ENCODE measurements at regions of chr3 and their contacts with region 1.

Region 1: GRCh38 chr3:15051531-15051930 is 13.6 kb downstream of the MRPS25 start:
- DNase-seq: peak; percentile 23 to 60
- ATAC-seq: peak; percentile 58 to 68 (median 66)
- H3K4me3 ChIP-seq: no peak overlapping the region
- H3K4me3 Mint-ChIP-seq: no peak overlapping the region
- H3K27ac ChIP-seq: peak overlapping the region; percentile 18
- H3K27ac Mint-ChIP-seq: peak overlapping the region in 1 of 2 donors; percentile 33
- H3K4me1 ChIP-seq: peaks cover 28% of the 10 kb centered on the region
- H3K4me1 Mint-ChIP-seq: peaks cover 11 to 35% of the 10 kb centered on the region in 2 donors
- H3K27me3 ChIP-seq: no peaks in the 10 kb centered on the region
- H3K27me3 Mint-ChIP-seq: no peaks in the 10 kb centered on the region
- CTCF ChIP-seq: peak; percentile 69

Region 2: DNA sequence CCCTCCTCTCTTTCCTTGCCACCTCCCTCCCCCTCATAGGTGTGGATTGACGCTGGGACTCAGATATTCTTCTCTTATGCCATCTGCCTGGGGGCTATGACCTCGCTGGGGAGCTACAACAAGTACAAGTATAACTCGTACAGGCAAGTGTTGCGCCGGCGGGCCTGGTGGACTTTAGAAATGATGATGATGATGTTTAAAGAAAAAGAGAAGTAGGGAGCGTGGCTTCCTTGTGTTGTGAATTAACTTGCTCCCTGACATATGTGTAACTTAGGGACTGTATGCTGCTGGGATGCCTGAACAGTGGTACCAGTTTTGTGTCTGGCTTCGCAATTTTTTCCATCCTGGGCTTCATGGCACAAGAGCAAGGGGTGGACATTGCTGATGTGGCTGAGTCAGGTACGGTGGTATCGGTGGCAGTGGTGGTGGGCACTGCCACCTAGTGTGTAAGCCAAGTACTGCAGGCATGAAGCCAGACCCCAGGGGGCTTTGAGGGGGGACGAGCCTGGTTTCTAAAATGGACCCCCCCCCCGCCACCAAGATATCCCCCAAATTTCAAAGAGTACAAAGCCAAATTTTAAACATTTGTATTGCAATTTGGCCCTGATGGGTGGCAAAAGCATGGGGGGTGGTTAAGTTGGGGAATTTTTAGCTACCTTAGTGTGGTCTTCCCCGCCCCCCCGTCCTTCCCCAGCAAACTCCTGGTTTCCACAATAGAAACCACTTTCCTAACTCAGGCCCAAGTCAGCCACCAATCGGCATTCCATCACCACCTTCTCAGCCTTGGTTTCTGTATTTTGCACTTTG is 583.5 kb before region 1 on chr3:
- intact Hi-C with region 1: no loop called
- DNase-seq: peak; percentile 49 to 74
- ATAC-seq: peak; percentile 71 to 91 (median 87)
- H3K4me3 ChIP-seq: no peak overlapping the region
- H3K4me3 Mint-ChIP-seq: no peak overlapping the region
- H3K27ac ChIP-seq: no peak overlapping the region
- H3K27ac Mint-ChIP-seq: no peak overlapping the region
- H3K4me1 ChIP-seq: no peaks in the 10 kb centered on the region
- H3K4me1 Mint-ChIP-seq: no peaks in the 10 kb centered on the region
- H3K27me3 ChIP-seq: no peaks in the 10 kb centered on the region
- H3K27me3 Mint-ChIP-seq: no peaks in the 10 kb centered on the region
- CTCF ChIP-seq: peak; percentile 84

Region 3: DNA sequence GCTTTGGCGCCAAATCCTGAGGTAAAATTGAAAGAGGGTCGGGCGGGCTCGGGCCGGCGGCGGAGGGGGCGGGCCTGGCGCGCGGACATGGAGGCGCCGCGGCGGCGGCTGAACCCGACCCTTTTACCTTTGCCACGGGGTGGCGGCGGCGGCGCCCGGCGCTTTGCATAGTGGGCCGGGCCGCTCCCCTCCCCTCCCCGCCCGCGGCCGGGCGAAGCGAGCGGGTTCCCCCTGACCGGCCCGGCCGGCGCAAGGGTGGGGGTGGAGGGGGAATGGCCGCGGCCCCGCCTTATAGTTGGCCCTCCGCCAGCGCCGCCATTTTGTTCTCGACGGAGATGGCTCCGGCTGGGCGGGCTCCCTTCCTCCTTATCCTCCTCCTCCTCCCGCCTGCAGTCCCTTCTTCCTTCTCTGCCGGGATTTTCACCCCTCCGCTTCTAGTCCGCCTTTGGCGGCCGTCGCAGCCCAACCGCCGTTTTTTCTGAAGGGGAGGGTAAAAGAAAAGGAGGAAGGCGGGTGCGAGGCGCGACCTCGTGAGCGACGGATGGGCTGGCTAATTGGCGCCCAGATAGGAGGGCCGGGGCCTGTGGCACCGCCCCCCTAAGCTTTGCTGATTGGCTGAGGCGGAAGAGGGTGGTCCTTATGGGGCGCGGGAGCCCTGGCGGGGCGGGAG is 103.5 kb before region 1 on chr3:
- intact Hi-C with region 1: loop called (anchors 5 kb)
- DNase-seq: peak; percentile 98
- ATAC-seq: peak; percentile 85 to 95 (median 86)
- H3K4me3 ChIP-seq: peak overlapping the region; percentile 100
- H3K4me3 Mint-ChIP-seq: peak overlapping the region; percentile 98
- H3K27ac ChIP-seq: peak overlapping the region; percentile 100
- H3K27ac Mint-ChIP-seq: peak overlapping the region; percentile 98 to 100
- H3K4me1 ChIP-seq: peaks cover 13% of the 10 kb centered on the region
- H3K4me1 Mint-ChIP-seq: peaks cover 35 to 49% of the 10 kb centered on the region in 2 donors
- H3K27me3 ChIP-seq: no peaks in the 10 kb centered on the region
- H3K27me3 Mint-ChIP-seq: no peaks in the 10 kb centered on the region
- CTCF ChIP-seq: no peak

Region 4: GRCh38 chr3:14988988-14989394 is 62.5 kb before region 1 on chr3:
- intact Hi-C with region 1: loop called (anchors 2 kb)
- DNase-seq: peak; percentile 26 to 41
- ATAC-seq: peak; percentile 92 to 99 (median 98)
- H3K4me3 ChIP-seq: no peak overlapping the region
- H3K4me3 Mint-ChIP-seq: no peak overlapping the region
- H3K27ac ChIP-seq: no peak overlapping the region
- H3K27ac Mint-ChIP-seq: peak overlapping the region; percentile 25 to 56
- H3K4me1 ChIP-seq: peaks cover 6% of the 10 kb centered on the region
- H3K4me1 Mint-ChIP-seq: peaks cover 47 to 55% of the 10 kb centered on the region in 2 donors
- H3K27me3 ChIP-seq: no peaks in the 10 kb centered on the region
- H3K27me3 Mint-ChIP-seq: no peaks in the 10 kb centered on the region
- CTCF ChIP-seq: no peak

Region 5: GRCh38 chr3:15064835-15065549 is 13.5 kb after region 1 on chr3 and contains the start of gene MRPS25:
- intact Hi-C with region 1: loop called (anchors 1 kb)
- DNase-seq: peak; percentile 81 to 94
- ATAC-seq: peak; percentile 98 to 99 (median 99)
- H3K4me3 ChIP-seq: peak within 1 kb of the TSS; percentile 70
- H3K4me3 Mint-ChIP-seq: peak within 1 kb of the TSS; percentile 94
- H3K27ac ChIP-seq: peak within 1 kb of the TSS; percentile 58
- H3K27ac Mint-ChIP-seq: peak within 1 kb of the TSS; percentile 84 to 92
- H3K4me1 ChIP-seq: peaks cover 16% of the 10 kb centered on the region
- H3K4me1 Mint-ChIP-seq: peaks cover 17 to 26% of the 10 kb centered on the region in 2 donors
- H3K27me3 ChIP-seq: no peaks in the 10 kb centered on the region
- H3K27me3 Mint-ChIP-seq: no peaks in the 10 kb centered on the region
- CTCF ChIP-seq: no peak
- total RNA-seq, gene MRPS25: 32.3 to 41.4 (median 41.4) TPM

Measured in natural killer cell (primary cell).